WTC11 (cell line): ENCODE measurements at regions of chr11 and their contacts with region 1.

Region 1: GRCh38 chr11:6362873-6363678 is 27.2 kb upstream of the SMPD1 start:
- DNase-seq: peak; percentile 89
- ATAC-seq: peak; percentile 99
- H3K4me3 Mint-ChIP-seq: no peak overlapping the region
- H3K27ac Mint-ChIP-seq: no peak overlapping the region
- H3K4me1 Mint-ChIP-seq: peaks cover 4% of the 10 kb centered on the region; the same call in 1 of the 2 replicates
- H3K27me3 Mint-ChIP-seq: no peaks in the 10 kb centered on the region
- CTCF ChIP-seq: peak; percentile 76

Region 2: GRCh38 chr11:6012035-6012668 is 350.9 kb before region 1 on chr11:
- CTCF ChIA-PET with region 1: interaction called, 10 read pairs
- POLR2A ChIA-PET with region 1: no interaction called
- DNase-seq: no peak
- ATAC-seq: peak; percentile 44; the same call in 1 of the 2 replicates
- H3K4me3 Mint-ChIP-seq: no peak overlapping the region
- H3K27ac Mint-ChIP-seq: no peak overlapping the region
- H3K4me1 Mint-ChIP-seq: no peaks in the 10 kb centered on the region
- H3K27me3 Mint-ChIP-seq: no peaks in the 10 kb centered on the region
- CTCF ChIP-seq: no peak

Region 3: GRCh38 chr11:6258571-6259081 is 104.5 kb before region 1 on chr11:
- CTCF ChIA-PET with region 1: interaction called, 85 read pairs
- POLR2A ChIA-PET with region 1: no interaction called
- DNase-seq: peak; percentile 36
- ATAC-seq: peak; percentile 40
- H3K4me3 Mint-ChIP-seq: no peak overlapping the region; the same call in none of the 2 replicates
- H3K27ac Mint-ChIP-seq: no peak overlapping the region
- H3K4me1 Mint-ChIP-seq: no peaks in the 10 kb centered on the region
- H3K27me3 Mint-ChIP-seq: no peaks in the 10 kb centered on the region
- CTCF ChIP-seq: no peak

Region 4: GRCh38 chr11:6307876-6308275 is 55.2 kb before region 1 on chr11:
- CTCF ChIA-PET with region 1: interaction called, 19 read pairs
- POLR2A ChIA-PET with region 1: no interaction called
- DNase-seq: no peak
- ATAC-seq: peak; percentile 22
- H3K4me3 Mint-ChIP-seq: no peak overlapping the region
- H3K27ac Mint-ChIP-seq: no peak overlapping the region
- H3K4me1 Mint-ChIP-seq: peaks cover 33% of the 10 kb centered on the region
- H3K27me3 Mint-ChIP-seq: no peaks in the 10 kb centered on the region
- CTCF ChIP-seq: no peak

Region 5: GRCh38 chr11:6377902-6378639 is 15.0 kb after region 1 on chr11:
- CTCF ChIA-PET with region 1: interaction called, 138 read pairs
- POLR2A ChIA-PET with region 1: no interaction called
- DNase-seq: no peak
- ATAC-seq: no peak
- H3K4me3 Mint-ChIP-seq: no peak overlapping the region
- H3K27ac Mint-ChIP-seq: no peak overlapping the region
- H3K4me1 Mint-ChIP-seq: peaks cover 13% of the 10 kb centered on the region
- H3K27me3 Mint-ChIP-seq: no peaks in the 10 kb centered on the region
- CTCF ChIP-seq: no peak

Region 6: DNA sequence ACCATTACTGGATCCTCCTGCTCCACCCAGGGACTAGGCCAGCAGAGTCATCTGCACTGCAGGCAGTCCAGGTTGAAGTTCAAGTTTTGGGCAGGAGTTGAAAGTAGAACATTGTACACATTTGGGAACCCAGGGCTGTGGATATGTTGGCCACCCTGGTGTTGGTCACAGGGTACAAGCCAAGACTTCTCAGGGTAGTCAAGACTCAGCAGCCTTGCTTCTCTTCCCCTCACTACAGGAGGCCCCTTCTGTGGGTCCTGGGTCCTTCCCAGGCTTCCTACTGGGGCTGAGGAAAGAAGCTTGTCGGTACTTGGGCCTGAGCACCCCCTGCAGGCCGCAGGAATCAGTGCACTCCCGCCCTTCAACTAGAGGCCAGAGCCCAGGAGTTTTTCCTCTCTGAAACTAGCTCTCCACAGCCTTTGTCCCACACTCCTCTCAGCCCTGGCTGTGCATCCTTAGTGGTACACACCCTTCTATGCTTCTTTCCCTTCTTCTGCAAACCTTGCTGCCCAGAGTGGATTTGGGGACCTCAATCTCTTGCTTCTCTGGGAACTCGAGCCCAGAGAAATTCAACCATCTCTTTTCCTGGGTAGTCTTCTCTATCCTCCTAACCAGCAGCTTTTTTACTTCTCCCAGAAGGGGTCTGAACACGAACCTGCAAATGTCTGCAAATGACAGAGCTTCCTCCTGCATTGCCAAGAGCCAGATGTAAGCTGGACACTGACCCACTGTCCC is 80.4 kb after region 1 on chr11:
- CTCF ChIA-PET with region 1: interaction called, 30 read pairs
- POLR2A ChIA-PET with region 1: interaction called, 4 read pairs
- DNase-seq: peak; percentile 68
- ATAC-seq: peak; percentile 90
- H3K4me3 Mint-ChIP-seq: no peak overlapping the region
- H3K27ac Mint-ChIP-seq: no peak overlapping the region
- H3K4me1 Mint-ChIP-seq: no peaks in the 10 kb centered on the region
- H3K27me3 Mint-ChIP-seq: no peaks in the 10 kb centered on the region
- CTCF ChIP-seq: peak; percentile 80

Region 7: GRCh38 chr11:6458352-6459098 is 95.4 kb after region 1 on chr11:
- CTCF ChIA-PET with region 1: no interaction called
- POLR2A ChIA-PET with region 1: no interaction called
- DNase-seq: no peak
- ATAC-seq: no peak
- H3K4me3 Mint-ChIP-seq: no peak overlapping the region
- H3K27ac Mint-ChIP-seq: no peak overlapping the region
- H3K4me1 Mint-ChIP-seq: no peaks in the 10 kb centered on the region
- H3K27me3 Mint-ChIP-seq: no peaks in the 10 kb centered on the region
- CTCF ChIP-seq: no peak